ENCODE measurements at regions of chr1 and their contacts with region 1.

Region 1: DNA sequence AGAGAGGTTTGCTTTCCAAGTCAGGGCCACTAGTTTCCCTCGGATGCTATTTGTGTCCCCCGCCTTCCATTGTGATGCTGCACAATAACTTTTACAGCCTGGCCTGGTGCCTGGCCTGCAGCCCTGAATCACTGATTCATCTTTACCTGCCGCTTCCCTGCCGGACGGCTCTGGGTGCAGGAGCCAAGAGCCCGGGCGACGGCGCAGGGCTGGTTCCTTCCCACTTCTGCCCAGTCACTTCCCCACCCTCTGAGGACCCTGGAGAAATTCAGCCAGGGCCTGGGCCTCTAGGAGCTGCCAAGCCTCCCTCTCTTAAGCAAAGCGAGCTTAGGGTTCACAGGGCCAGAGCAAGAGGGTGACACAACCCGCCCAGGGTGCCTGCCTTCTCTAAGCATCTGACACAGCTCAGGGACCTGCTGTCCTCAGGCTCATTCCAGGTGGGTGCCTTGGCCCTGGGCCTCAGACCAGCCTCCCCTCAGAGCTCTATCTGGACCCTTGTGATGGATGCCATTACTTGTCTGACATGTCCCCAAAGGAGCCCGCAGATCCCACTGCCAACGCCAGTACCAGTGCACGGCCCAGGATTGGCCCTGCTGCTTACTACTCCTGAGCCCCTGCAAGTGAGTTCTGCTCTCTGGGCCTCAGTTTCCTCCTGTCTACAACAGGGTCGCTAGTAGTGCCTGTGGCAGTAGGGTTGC is 381.0 kb upstream of the VAMP3 start:
- DNase-seq: no peak
- ATAC-seq: no peak
- H3K4me3 ChIP-seq: no peak overlapping the region
- H3K27ac ChIP-seq: no peak overlapping the region
- H3K4me1 ChIP-seq: peaks cover 12% of the 10 kb centered on the region
- H3K27me3 ChIP-seq: no peaks in the 10 kb centered on the region; the same call in 1 of the 2 replicates
- CTCF ChIP-seq: no peak
- POLR2A ChIP-seq: no peak
- RAD21 ChIP-seq: no peak

Region 2: DNA sequence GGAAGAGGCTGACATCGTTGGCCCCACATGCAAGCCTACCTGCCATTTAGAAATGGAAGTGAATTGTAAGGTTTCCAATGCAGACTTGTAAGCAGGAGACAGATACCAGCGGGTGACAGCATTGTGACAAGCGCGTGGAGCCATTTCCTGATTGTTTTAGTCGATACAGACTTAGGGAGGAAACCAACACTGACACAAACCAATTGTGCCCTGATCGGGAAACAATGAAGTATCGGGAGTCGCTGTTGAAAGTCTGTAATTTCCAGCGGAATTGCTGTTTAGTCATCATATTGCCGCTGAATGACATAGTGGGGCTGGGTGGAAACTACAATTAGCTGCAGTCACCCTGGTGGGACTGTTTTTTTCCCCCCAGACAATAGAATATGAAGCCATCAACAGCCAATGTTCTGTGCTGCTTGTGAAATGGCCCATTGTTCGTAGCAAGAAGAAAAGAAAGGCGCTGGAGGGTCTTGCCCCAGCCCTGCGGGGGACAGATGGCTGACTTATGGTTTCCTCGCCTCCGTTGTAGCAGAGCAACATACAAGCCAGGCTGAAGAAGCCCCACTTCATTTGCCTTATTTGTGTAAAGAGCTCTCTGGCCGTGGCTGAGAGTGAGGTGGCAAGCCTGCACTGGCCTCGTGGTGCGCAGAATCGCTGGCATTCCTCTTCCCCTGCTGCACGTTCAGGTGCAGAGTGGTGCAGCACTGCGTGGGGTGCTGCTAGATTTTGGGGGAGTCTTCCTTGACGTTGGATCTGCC is 142.1 kb before region 1 on chr1:
- CTCF ChIA-PET with region 1: no interaction called
- POLR2A ChIA-PET with region 1: no interaction called
- dilution Hi-C with region 1: no loop called
- in situ Hi-C with region 1: no loop called
- intact Hi-C with region 1: loop called (anchors 10 kb)
- DNase-seq: no peak
- ATAC-seq: no peak
- H3K4me3 ChIP-seq: no peak overlapping the region
- H3K27ac ChIP-seq: no peak overlapping the region
- H3K4me1 ChIP-seq: peaks cover 3% of the 10 kb centered on the region
- H3K27me3 ChIP-seq: no peaks in the 10 kb centered on the region
- CTCF ChIP-seq: no peak
- POLR2A ChIP-seq: no peak
- RAD21 ChIP-seq: no peak